ENCODE measurements at regions of chr17 and their contacts with region 1.

Region 1: DNA sequence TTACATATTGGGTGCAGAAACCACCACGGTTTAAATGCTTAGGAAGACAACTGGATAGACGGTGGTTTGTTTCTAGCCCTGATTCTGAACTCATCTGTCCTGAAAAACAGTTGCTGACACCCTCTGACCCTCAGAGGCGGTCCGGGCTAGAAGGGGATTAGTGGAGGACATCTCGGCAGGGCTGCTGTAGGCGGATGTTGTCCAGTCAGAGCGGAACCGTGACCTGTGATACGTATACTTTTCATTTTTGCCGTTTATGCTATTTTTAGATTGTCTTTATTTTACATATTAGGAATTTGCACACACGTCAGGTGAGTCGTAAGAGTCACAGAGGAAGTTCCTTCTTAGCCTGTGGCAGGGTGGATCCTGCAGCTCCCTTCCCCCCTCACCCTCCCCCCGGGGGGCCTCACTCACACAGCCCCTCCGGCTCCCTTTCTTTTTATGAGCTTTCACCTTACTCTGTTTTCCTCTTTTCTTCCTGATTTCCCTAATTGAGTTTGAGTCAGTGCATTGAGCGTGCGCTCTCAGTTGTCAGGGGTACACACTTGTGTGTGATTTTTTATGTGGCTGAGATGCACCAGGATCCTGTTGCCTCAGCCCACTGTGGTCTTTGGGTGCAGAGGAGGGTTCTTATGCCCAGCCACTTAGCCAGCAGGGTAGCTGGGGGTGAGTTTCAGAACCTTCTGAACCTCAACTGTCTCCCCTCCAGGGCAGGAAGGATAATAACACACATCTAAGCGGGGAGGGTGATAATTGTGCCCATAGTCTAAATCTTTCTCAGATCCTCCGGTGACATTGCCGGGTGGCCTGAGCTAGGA is 211.1 kb upstream of the CHMP6 start:
- DNase-seq: peak; percentile 64
- ATAC-seq: peak; percentile 64
- H3K4me3 Mint-ChIP-seq: peak overlapping the region; percentile 74
- H3K27ac Mint-ChIP-seq: peak overlapping the region; percentile 96
- H3K4me1 Mint-ChIP-seq: peaks cover 63% of the 10 kb centered on the region
- H3K27me3 Mint-ChIP-seq: no peaks in the 10 kb centered on the region

Region 2: GRCh38 chr17:80855948-80856862 is 75.6 kb after region 1 on chr17:
- POLR2A ChIA-PET with region 1: interaction called, 11 read pairs
- DNase-seq: peak; percentile 76
- ATAC-seq: peak; percentile 98
- H3K4me3 Mint-ChIP-seq: peak overlapping the region; percentile 47
- H3K27ac Mint-ChIP-seq: peak overlapping the region; percentile 94
- H3K4me1 Mint-ChIP-seq: peaks cover 57% of the 10 kb centered on the region
- H3K27me3 Mint-ChIP-seq: no peaks in the 10 kb centered on the region

Measured in activated naive CD8-positive, alpha-beta T cell treated with anti-CD3 and anti-CD28 coated beads, Interleukin-2, amount 10 ng/mL, durations not matched to agents 7 days and 5 days (primary cell).